ENCODE measurements at regions of chr19 and their contacts with region 1.

Region 1: DNA sequence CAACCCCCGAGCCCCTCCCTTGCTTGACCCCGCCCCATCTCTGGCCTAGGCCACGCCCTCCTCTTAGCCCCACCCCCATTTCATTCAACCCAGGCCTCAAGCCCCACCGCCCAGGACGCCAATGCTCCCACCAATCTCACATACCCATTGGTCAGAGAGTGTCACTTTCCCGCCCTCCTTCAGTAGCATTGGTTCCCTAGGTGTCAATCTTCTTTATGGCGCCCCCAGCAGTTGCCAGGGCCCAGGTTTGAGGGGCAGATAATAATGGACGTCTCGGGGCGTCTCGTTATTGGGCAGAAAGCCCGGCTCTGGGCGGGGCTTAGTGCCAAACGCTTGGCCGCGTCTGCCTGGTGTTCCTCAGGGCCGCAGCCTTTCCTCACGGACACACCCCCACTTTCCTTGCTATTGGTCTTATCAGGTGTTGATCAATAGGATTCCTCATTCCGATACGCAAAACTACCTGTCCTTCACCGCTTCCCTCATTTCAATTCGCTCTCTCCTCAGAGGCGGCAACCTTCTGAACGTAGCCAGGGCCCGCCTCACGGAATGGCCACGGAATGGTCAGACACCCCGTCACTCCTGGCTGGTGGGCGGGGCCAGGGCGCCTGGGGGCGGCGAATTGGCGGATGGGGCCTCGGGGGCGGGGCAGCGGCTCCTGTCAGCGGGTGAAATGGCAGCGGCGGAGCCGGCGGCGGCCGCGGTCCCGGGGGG is at the start of gene EVI5L:
- DNase-seq: peak; percentile 99 to 100 (median 100)
- ATAC-seq: peak; percentile 82
- H3K4me3 ChIP-seq: peak within 1 kb of the TSS; percentile 44 to 45
- H3K4me3 Mint-ChIP-seq: peak within 1 kb of the TSS; percentile 80
- H3K27ac ChIP-seq: peak within 1 kb of the TSS in 1 of 2 experiments; percentile 66
- H3K27ac Mint-ChIP-seq: peak within 1 kb of the TSS; percentile 83
- H3K4me1 ChIP-seq: peaks cover 13% of the 10 kb centered on the region
- H3K4me1 Mint-ChIP-seq: peaks cover 16% of the 10 kb centered on the region
- H3K27me3 ChIP-seq: no peaks in the 10 kb centered on the region
- H3K27me3 Mint-ChIP-seq: no peaks in the 10 kb centered on the region
- CTCF ChIP-seq: no peak
- total RNA-seq, gene EVI5L: 4.1 to 4.2 TPM

Region 2: GRCh38 chr19:7629347-7630054 is 200.2 kb before region 1 on chr19 and contains the starts of genes PET100 and XAB2:
- CTCF ChIA-PET with region 1: no interaction called
- POLR2A ChIA-PET with region 1: no interaction called
- intact Hi-C with region 1: loop called in 1 of 2 experiments (anchors 2 kb)
- DNase-seq: peak; percentile 90 to 99 (median 94)
- ATAC-seq: peak; percentile 94
- H3K4me3 ChIP-seq: peak within 1 kb of the TSS; percentile 98 to 100
- H3K4me3 Mint-ChIP-seq: peak within 1 kb of the TSS; percentile 97
- H3K27ac ChIP-seq: peak within 1 kb of the TSS; percentile 92 to 99
- H3K27ac Mint-ChIP-seq: peak within 1 kb of the TSS; percentile 99
- H3K4me1 ChIP-seq: peaks cover 27% of the 10 kb centered on the region
- H3K4me1 Mint-ChIP-seq: peaks cover 36% of the 10 kb centered on the region
- H3K27me3 ChIP-seq: no peaks in the 10 kb centered on the region
- H3K27me3 Mint-ChIP-seq: no peaks in the 10 kb centered on the region
- CTCF ChIP-seq: no peak
- total RNA-seq, gene PET100: 186 to 188 TPM
- total RNA-seq, gene XAB2: 127 to 133 TPM

Region 3: GRCh38 chr19:7806876-7807275 is 22.8 kb before region 1 on chr19:
- CTCF ChIA-PET with region 1: no interaction called
- POLR2A ChIA-PET with region 1: no interaction called
- intact Hi-C with region 1: loop called in 1 of 2 experiments (anchors 1 kb)
- DNase-seq: no peak
- ATAC-seq: no peak
- H3K4me3 ChIP-seq: no peak overlapping the region
- H3K4me3 Mint-ChIP-seq: no peak overlapping the region
- H3K27ac ChIP-seq: no peak overlapping the region
- H3K27ac Mint-ChIP-seq: no peak overlapping the region
- H3K4me1 ChIP-seq: no peaks in the 10 kb centered on the region
- H3K4me1 Mint-ChIP-seq: peaks cover 4% of the 10 kb centered on the region
- H3K27me3 ChIP-seq: no peaks in the 10 kb centered on the region
- H3K27me3 Mint-ChIP-seq: peaks cover 11% of the 10 kb centered on the region
- CTCF ChIP-seq: no peak

Region 4: DNA sequence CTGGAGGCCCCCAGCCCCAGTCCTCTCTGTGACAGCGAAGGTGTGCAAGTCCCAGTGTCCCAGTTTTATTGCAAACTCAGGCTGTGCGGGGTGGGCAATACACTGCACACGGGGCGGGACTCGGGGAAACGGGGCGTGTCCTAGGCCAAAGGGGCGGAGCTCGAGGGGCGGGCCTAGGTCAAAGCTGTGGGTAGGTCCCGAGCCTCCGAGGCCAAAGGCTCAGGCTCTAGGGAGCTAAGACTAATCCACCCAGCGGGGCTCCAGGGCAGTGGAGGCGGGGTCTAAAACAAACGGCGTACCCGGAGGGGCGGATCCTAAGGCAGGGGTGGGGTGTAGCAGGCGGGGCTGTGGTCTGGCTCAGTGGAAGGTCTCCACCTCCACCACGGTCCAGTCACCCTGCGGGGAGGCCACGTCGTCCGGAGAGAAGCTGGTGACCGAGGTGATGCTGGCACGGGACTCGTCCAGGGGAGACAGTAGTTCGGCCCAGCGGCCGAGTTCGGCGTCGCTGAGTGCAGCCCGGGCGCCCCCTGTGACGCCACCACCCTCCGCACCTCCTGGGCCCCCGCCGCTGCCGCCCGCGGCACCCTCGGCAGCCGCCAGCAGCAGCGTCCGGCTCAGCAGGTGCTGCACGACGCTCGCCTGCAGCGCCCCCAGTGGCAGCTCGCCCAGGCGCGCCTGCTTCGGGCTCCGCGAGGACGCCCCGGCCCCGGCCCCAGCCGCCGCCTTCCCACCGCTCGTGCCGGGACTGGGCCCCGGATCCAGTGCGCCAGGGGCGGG is 39.1 kb after region 1 on chr19:
- CTCF ChIA-PET with region 1: interaction called, 4 read pairs
- POLR2A ChIA-PET with region 1: no interaction called
- intact Hi-C with region 1: loop called (anchors 1 kb)
- DNase-seq: peak; percentile 71 to 95 (median 85)
- ATAC-seq: peak; percentile 62
- H3K4me3 ChIP-seq: peak overlapping the region; percentile 61 to 62
- H3K4me3 Mint-ChIP-seq: peak overlapping the region; percentile 82
- H3K27ac ChIP-seq: peak overlapping the region; percentile 64 to 65
- H3K27ac Mint-ChIP-seq: peak overlapping the region; percentile 90
- H3K4me1 ChIP-seq: peaks cover 63% of the 10 kb centered on the region
- H3K4me1 Mint-ChIP-seq: peaks cover 44% of the 10 kb centered on the region
- H3K27me3 ChIP-seq: peaks cover 4 to 25% of the 10 kb centered on the region in 2 experiments
- H3K27me3 Mint-ChIP-seq: peaks cover 27% of the 10 kb centered on the region
- CTCF ChIP-seq: peak; percentile 82

Region 5: DNA sequence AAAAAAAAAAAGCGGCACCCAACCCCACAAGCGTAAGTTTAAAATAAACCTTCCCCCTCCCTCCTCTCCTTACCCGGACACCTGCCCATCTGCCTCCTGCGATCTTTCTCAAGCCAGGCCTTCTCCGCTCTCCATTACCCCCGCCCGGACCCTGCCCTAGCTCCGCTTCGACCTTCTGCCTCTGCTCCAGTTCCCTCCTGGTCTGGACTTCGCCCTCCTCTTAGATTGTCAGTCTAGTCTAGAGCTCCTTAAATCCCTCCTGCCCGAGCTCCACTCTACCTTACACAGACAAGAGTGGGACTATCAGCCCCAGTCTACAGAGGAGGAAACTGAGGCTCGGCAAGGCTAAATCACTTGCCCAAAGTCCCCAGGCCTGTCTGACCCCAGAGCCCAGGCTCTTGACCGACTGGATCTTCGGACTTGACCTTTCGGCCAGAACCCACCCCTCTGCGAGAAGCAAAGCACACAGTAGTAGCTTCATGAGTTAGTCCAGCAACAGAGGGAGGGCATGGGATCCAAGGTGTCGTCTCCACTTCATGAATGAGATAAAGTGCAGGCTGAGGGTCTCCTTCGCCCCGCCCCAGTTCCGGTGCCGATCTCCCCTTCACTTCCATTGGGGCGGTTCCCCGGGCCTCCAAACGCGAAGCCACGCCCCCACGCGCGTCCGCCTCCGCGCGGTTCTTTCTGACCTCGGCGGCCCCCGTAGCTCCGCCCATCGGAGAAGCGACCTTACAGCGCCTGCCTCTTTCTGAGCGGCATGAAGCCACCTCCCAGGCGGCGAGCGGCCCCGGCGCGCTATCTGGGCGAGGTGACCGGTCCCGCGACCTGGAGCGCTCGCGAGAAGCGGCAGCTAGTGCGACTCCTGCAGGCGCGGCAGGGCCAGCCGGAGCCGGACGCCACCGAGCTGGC is 90.1 kb after region 1 on chr19 and contains the start of gene SNAPC2:
- CTCF ChIA-PET with region 1: no interaction called
- POLR2A ChIA-PET with region 1: interaction called, 3 read pairs
- intact Hi-C with region 1: loop called (anchors 1 kb)
- DNase-seq: peak; percentile 93 to 98 (median 96)
- ATAC-seq: peak; percentile 63
- H3K4me3 ChIP-seq: peak within 1 kb of the TSS; percentile 51 to 87
- H3K4me3 Mint-ChIP-seq: peak within 1 kb of the TSS; percentile 88
- H3K27ac ChIP-seq: peak within 1 kb of the TSS; percentile 55 to 65
- H3K27ac Mint-ChIP-seq: peak within 1 kb of the TSS; percentile 90
- H3K4me1 ChIP-seq: peaks cover 42% of the 10 kb centered on the region
- H3K4me1 Mint-ChIP-seq: peaks cover 48% of the 10 kb centered on the region
- H3K27me3 ChIP-seq: peaks cover 21 to 27% of the 10 kb centered on the region in 2 experiments
- H3K27me3 Mint-ChIP-seq: peaks cover 25% of the 10 kb centered on the region
- CTCF ChIP-seq: no peak
- total RNA-seq, gene SNAPC2: 15.4 to 17.0 TPM

Measured in CD8-positive, alpha-beta T cell (primary cell).